SK-N-SH (cell line): ENCODE measurements at regions of chr6 and their contacts with region 1.

Region 1: GRCh38 chr6:53725791-53726431 is 60.4 kb upstream of the KLHL31 start:
- DNase-seq: peak; percentile 80
- H3K4me3 ChIP-seq: peak overlapping the region in 1 of 2 experiments; percentile 34; a peak in 1 of 4 replicates
- H3K27ac ChIP-seq: no peak overlapping the region
- H3K4me1 ChIP-seq: no peaks in the 10 kb centered on the region
- H3K27me3 ChIP-seq: peaks cover 10% of the 10 kb centered on the region; the same call in 1 of the 2 replicates
- CTCF ChIP-seq: peak; percentile 96
- EP300 ChIP-seq: no peak
- RAD21 ChIP-seq: peak; percentile 71

Region 2: DNA sequence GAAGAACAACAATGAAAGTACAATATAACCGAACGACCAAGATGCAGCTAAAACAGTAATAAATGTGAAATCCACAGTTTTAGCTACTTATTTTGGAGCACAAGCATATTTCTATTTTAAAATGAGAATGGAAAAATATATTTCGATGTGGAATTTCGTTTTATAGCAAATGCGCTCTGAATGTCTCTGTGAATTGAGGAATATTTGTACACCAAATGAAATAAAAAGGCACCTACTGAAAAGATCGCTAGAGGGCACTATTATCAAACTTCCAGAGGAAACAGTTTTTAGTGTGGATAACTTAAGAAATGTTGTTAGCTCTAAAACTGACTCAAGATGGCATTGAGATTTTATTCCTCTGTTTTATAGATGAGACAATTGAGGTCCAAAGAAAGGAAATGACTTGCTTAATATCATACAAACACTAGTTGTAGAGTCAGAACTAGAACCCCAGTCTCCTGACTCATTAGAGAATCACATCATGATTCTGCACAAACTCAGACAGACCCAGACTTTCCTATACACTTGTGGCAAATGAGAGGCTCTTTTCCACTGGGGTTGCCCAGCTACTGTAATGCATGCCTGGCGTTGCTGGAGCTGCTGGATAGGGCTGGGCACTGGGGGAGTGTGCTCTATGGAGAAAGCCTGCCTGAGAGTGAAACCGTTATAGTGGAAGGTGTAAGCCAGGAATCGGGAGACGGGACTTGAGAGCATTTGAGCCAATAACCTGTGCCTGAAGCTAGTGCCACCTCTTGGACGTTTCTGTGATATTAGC is 232.9 kb before region 1 on chr6:
- CTCF ChIA-PET with region 1: interaction called, 159 read pairs
- POLR2A ChIA-PET with region 1: no interaction called
- DNase-seq: peak; percentile 30
- H3K4me3 ChIP-seq: peak overlapping the region; percentile 28 to 40; a peak in 2 of 4 replicates
- H3K27ac ChIP-seq: no peak overlapping the region
- H3K4me1 ChIP-seq: peaks cover 2 to 9% of the 10 kb centered on the region in 2 experiments; a peak in 3 of 4 replicates
- H3K27me3 ChIP-seq: no peaks in the 10 kb centered on the region
- CTCF ChIP-seq: peak; percentile 87
- EP300 ChIP-seq: no peak
- RAD21 ChIP-seq: peak; percentile 83

Region 3: GRCh38 chr6:53544470-53545308 is 181.2 kb before region 1 on chr6 and contains the start of gene GCLC:
- CTCF ChIA-PET with region 1: interaction called, 13 read pairs
- POLR2A ChIA-PET with region 1: no interaction called
- DNase-seq: peak; percentile 94
- H3K4me3 ChIP-seq: peak within 1 kb of the TSS; percentile 90 to 94
- H3K27ac ChIP-seq: peak within 1 kb of the TSS; percentile 72 to 88; a peak in 3 of 4 replicates
- H3K4me1 ChIP-seq: peaks cover 7 to 14% of the 10 kb centered on the region in 2 experiments; a peak in 3 of 4 replicates
- H3K27me3 ChIP-seq: no peaks in the 10 kb centered on the region
- CTCF ChIP-seq: peak; percentile 56
- EP300 ChIP-seq: peak in 1 of 2 experiments; percentile 19; a peak in 1 of 4 replicates
- RAD21 ChIP-seq: peak; percentile 52
- polyA plus RNA-seq, gene GCLC: 7.5 and 11.2 TPM in 2 replicates

Region 4: DNA sequence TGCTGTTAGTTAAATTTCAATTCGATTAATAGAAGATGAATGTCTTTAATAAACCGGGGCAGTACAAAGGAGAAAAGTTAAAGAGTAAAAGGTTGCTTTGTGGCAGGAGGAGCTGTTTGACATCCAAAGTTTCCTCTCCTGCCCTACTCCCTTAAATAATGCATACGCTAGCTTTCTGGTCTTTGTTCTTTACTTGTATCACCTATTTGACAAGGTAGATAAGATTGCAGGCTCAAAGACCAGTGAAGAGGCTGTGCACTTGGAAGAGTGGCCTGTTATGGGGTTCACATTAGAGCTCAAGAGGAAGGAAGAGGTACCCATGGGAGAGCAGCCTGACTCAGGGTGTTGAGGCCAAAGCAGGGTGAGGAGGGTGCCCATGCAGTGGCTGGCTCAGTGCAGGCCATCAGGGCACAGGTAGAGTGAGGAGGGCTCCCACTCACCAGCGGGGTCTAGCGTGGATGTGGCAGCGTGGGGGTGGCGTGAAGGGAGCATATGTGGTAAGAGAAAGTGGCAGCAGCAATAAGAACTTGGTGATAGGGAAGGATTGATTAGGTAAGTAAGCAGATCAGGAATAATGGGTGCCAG is 31.0 kb before region 1 on chr6:
- CTCF ChIA-PET with region 1: interaction called, 13 read pairs
- POLR2A ChIA-PET with region 1: no interaction called
- DNase-seq: no peak
- H3K4me3 ChIP-seq: no peak overlapping the region
- H3K27ac ChIP-seq: no peak overlapping the region
- H3K4me1 ChIP-seq: no peaks in the 10 kb centered on the region
- H3K27me3 ChIP-seq: no peaks in the 10 kb centered on the region; the same call in 1 of the 2 replicates
- CTCF ChIP-seq: no peak
- EP300 ChIP-seq: no peak
- RAD21 ChIP-seq: no peak

Region 5: DNA sequence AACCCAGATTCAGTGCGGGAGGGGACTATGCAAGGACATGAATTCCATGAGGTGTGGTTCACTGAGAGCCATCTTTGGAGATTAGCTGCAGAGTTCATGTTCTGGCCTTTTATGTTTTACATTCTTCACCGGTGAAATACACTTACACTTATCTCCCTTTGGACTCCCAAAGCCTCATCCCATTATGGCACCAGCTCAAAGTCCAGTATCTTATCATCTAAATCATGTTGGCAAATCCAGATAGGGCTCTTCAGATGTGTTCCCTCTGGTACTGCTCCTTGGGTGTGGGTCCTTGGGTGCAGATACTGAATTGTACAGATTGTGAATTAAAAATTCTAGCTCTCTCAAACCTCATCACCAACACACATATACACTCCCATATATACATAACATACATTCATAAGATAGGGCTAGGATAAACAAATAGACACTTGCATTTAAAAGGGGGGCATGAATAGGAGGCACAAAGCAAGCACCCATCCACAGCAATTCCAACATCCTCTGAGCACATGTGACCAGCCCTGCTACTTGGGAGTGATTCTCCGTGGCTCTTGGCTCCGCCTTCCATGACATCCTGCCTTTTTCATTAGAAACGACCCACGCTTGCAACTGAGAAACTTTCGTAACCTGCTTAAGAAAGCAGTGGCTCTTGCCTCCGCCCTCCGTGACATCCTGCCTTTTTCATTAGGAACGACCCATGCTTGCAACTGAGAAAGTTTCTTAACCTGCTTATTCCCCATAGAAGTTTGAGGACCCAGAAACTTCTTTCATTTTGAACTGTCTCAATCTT is 15.3 kb after region 1 on chr6:
- CTCF ChIA-PET with region 1: interaction called, 13 read pairs
- POLR2A ChIA-PET with region 1: no interaction called
- DNase-seq: no peak
- H3K4me3 ChIP-seq: no peak overlapping the region
- H3K27ac ChIP-seq: no peak overlapping the region
- H3K4me1 ChIP-seq: no peaks in the 10 kb centered on the region
- H3K27me3 ChIP-seq: no peaks in the 10 kb centered on the region
- CTCF ChIP-seq: no peak
- EP300 ChIP-seq: no peak
- RAD21 ChIP-seq: no peak